ENCODE measurements at regions of chr7 and their contacts with region 1.

Region 1: GRCh38 chr7:29189743-29190201 is 4.8 kb upstream of the CHN2 start:
- DNase-seq: peak; percentile 57
- H3K4me3 Mint-ChIP-seq: no peak overlapping the region
- H3K27ac Mint-ChIP-seq: no peak overlapping the region
- H3K4me1 Mint-ChIP-seq: peaks cover 4% of the 10 kb centered on the region
- H3K27me3 Mint-ChIP-seq: peaks cover 64% of the 10 kb centered on the region

Region 2: GRCh38 chr7:29345600-29345999 is 155.8 kb after region 1 on chr7:
- CTCF ChIA-PET with region 1: interaction called, 16 read pairs
- DNase-seq: peak; percentile 45
- H3K4me3 Mint-ChIP-seq: no peak overlapping the region
- H3K27ac Mint-ChIP-seq: no peak overlapping the region
- H3K4me1 Mint-ChIP-seq: no peaks in the 10 kb centered on the region
- H3K27me3 Mint-ChIP-seq: peaks cover 5% of the 10 kb centered on the region

Region 3: GRCh38 chr7:29408841-29409243 is 219.1 kb after region 1 on chr7:
- CTCF ChIA-PET with region 1: interaction called, 56 read pairs
- DNase-seq: peak; percentile 58
- H3K4me3 Mint-ChIP-seq: no peak overlapping the region
- H3K27ac Mint-ChIP-seq: no peak overlapping the region
- H3K4me1 Mint-ChIP-seq: no peaks in the 10 kb centered on the region
- H3K27me3 Mint-ChIP-seq: peaks cover 16% of the 10 kb centered on the region